SK-N-SH (cell line): ENCODE measurements at regions of chr3 and their contacts with region 1.

Region 1: DNA sequence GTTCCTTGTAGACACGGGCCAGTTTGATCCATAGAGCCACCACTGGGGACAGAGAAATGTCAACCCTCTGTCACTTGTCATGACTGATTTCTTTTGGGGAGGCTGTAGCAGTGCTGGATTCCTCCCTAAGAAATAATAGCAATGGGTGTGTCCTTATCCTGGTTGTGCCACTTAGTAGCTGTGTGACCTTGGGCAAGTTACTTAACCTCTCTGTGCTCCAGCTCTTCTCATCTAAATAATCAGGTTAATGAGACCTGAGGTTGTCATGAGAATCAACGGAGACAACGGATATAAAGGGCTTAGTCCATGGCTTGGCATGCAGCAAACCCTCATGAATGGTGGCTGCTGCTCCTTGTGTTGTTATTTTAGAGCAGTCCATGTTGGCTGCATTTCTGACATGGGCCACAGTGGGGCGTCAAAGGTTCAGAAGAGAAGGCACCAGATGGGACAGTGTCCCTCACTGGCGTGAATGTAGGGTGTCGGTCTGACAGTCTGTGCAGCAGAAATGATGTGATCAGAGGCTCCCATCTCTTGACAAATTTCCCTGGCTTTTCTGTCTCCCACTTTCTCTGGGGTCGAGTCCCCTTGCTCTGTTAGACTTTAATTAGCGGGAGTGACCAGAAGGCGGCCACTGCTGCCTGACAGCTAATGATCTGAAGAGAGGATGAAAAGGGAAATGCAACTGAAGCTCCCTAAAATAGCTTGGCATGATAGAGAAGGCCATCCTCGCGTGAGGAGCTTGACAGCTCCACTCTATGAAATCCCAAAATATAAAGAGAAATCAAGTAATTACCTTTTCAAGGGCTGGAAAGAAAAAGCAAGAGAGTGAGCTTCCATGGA is 209.4 kb downstream of the CADPS start:
- DNase-seq: peak; percentile 50
- H3K4me3 ChIP-seq: peak overlapping the region in 1 of 2 experiments; percentile 14; a peak in 1 of 4 replicates
- H3K27ac ChIP-seq: no peak overlapping the region
- H3K4me1 ChIP-seq: peaks cover 0 to 12% of the 10 kb centered on the region in 2 experiments; a peak in 2 of 4 replicates
- H3K27me3 ChIP-seq: no peaks in the 10 kb centered on the region
- CTCF ChIP-seq: peak; percentile 93
- EP300 ChIP-seq: no peak
- RAD21 ChIP-seq: peak; percentile 96

Region 2: GRCh38 chr3:62405135-62405534 is 260.7 kb before region 1 on chr3:
- CTCF ChIA-PET with region 1: no interaction called
- POLR2A ChIA-PET with region 1: no interaction called
- DNase-seq: no peak
- H3K4me3 ChIP-seq: no peak overlapping the region
- H3K27ac ChIP-seq: no peak overlapping the region
- H3K4me1 ChIP-seq: no peaks in the 10 kb centered on the region
- H3K27me3 ChIP-seq: no peaks in the 10 kb centered on the region
- CTCF ChIP-seq: no peak
- EP300 ChIP-seq: no peak
- RAD21 ChIP-seq: no peak

Region 3: DNA sequence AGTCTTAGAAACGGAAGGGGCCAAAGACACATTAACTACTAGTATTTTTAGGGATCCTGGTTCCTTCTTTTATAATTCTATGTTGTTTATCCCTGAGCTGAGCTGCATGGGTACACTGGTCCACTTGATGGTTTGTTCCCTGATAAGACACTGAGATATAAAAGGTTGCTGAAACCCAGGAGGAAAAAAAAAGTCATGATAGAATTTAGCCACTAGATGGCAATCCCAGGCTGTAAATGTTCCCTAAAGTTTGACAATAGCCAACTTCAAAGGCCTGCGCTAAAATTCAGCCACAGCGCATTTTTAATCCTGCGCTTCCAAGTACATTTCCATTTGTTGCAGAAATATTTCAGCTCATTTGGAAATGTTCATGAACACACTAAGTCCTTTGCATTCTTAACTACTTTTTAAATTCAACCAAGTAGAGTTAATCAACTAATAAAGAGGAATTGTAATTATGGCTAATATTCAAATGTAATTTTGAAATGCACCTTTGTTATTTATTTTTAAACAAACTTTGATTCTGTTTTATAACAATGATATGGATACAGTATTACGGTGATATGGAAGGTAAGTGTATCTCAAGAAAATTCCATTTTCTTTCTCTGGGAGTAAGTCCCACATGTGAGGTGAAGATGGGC is 43.1 kb before region 1 on chr3:
- CTCF ChIA-PET with region 1: interaction called, 35 read pairs
- POLR2A ChIA-PET with region 1: no interaction called
- DNase-seq: peak; percentile 44
- H3K4me3 ChIP-seq: no peak overlapping the region; a peak in 1 of 4 replicates
- H3K27ac ChIP-seq: no peak overlapping the region
- H3K4me1 ChIP-seq: no peaks in the 10 kb centered on the region
- H3K27me3 ChIP-seq: no peaks in the 10 kb centered on the region
- CTCF ChIP-seq: peak; percentile 76
- EP300 ChIP-seq: no peak
- RAD21 ChIP-seq: peak; percentile 87

Region 4: DNA sequence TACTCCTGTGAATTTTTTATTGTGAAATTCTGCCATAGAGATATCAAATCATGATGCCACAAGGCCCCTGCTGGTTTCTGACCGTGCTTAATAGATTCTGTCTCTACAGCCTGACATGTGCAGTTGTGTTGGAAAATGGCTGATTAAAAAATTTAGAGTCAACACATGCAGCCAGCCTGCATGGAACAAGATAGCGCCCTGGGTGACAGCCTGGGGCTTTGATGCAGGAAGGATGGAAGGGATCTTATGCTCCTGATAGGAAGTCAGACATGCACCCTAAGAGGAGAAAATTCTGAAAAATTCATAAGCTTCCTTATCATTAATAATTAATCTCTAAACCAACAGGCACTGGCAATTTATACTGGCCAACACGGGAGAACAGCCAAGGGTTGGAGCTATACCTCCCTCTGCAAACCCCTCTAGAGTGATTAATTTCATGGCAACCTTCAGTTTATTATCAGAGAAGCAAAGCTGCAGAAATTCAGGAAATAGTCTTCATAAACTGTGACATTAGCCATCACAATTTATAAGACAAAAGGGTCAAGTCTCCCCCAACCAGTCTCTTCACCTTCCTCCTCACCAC is 11.0 kb after region 1 on chr3:
- CTCF ChIA-PET with region 1: interaction called, 25 read pairs
- POLR2A ChIA-PET with region 1: no interaction called
- DNase-seq: peak; percentile 6
- H3K4me3 ChIP-seq: no peak overlapping the region
- H3K27ac ChIP-seq: no peak overlapping the region
- H3K4me1 ChIP-seq: peaks cover 0 to 5% of the 10 kb centered on the region in 2 experiments; a peak in 2 of 4 replicates
- H3K27me3 ChIP-seq: no peaks in the 10 kb centered on the region; the same call in 1 of the 2 replicates
- CTCF ChIP-seq: no peak
- EP300 ChIP-seq: 0 out of 4 replicates have a peak, but pooled peaks of 1 of the 2 experiments have one; percentile 14
- RAD21 ChIP-seq: no peak

Region 5: DNA sequence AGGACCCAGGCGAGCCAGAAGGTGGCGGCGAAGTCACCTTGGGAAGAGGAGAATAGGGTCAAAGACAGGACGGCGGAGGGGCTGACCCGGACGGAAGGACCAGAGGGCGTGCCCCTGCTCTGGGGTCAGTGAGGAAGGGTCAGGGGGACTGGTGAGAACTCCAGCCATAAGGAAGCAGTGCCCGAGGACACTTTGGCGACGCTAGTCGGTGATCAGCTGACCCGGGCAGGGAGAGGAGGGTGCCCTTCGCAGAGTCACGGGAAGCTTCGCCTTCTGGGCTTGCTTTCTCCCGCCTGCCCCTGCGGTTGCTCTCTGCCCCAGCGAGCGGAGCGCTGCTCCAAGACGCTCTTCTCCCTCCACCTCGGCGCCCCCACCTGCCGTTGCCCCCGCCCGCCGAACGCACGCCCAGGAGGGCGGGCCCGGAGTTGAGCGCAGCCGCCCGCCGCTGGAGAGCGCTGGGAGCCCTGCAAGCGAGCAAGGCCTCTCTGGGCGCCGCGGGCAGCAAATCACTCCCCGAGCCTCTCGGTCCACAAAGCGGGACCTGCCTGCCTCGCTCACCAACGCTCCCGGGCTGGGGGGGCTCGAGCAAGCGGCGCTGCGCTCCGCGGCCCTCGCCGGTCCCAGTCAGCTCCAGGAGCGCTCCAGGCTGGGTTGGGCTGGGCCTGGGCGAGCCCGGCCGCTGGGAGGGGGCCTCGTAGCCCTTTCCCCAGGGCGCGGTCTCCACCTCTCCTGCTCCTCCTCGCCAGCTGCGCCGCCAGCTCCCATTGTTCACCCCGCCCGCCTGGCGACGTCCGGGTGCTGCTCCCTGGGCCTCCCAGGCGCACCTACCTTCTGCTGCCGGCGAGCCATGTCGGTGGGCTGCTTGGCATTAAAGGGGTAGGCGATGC is 208.2 kb after region 1 on chr3:
- CTCF ChIA-PET with region 1: interaction called, 57 read pairs
- POLR2A ChIA-PET with region 1: no interaction called
- DNase-seq: peak; percentile 81
- H3K4me3 ChIP-seq: peak overlapping the region; percentile 61 to 66
- H3K27ac ChIP-seq: peak overlapping the region; percentile 50 to 63
- H3K4me1 ChIP-seq: peaks cover 0 to 15% of the 10 kb centered on the region in 2 experiments; a peak in 2 of 4 replicates
- H3K27me3 ChIP-seq: no peaks in the 10 kb centered on the region
- CTCF ChIP-seq: peak; percentile 53
- EP300 ChIP-seq: no peak
- RAD21 ChIP-seq: peak; percentile 56

Region 6: GRCh38 chr3:62954580-62954979 is 288.8 kb after region 1 on chr3:
- CTCF ChIA-PET with region 1: no interaction called
- POLR2A ChIA-PET with region 1: no interaction called
- DNase-seq: no peak
- H3K4me3 ChIP-seq: no peak overlapping the region
- H3K27ac ChIP-seq: no peak overlapping the region
- H3K4me1 ChIP-seq: no peaks in the 10 kb centered on the region
- H3K27me3 ChIP-seq: no peaks in the 10 kb centered on the region
- CTCF ChIP-seq: no peak
- EP300 ChIP-seq: no peak
- RAD21 ChIP-seq: no peak

Region 7: GRCh38 chr3:63228087-63229023 is 562.5 kb after region 1 on chr3:
- CTCF ChIA-PET with region 1: interaction called, 65 read pairs
- POLR2A ChIA-PET with region 1: no interaction called
- DNase-seq: peak; percentile 33
- H3K4me3 ChIP-seq: peak overlapping the region in 1 of 2 experiments; percentile 20; a peak in 1 of 4 replicates
- H3K27ac ChIP-seq: no peak overlapping the region
- H3K4me1 ChIP-seq: no peaks in the 10 kb centered on the region
- H3K27me3 ChIP-seq: no peaks in the 10 kb centered on the region
- CTCF ChIP-seq: peak; percentile 73
- EP300 ChIP-seq: no peak
- RAD21 ChIP-seq: peak; percentile 77